SK-N-SH (cell line): ENCODE measurements at regions of chr17 and their contacts with region 1.

Region 1: DNA sequence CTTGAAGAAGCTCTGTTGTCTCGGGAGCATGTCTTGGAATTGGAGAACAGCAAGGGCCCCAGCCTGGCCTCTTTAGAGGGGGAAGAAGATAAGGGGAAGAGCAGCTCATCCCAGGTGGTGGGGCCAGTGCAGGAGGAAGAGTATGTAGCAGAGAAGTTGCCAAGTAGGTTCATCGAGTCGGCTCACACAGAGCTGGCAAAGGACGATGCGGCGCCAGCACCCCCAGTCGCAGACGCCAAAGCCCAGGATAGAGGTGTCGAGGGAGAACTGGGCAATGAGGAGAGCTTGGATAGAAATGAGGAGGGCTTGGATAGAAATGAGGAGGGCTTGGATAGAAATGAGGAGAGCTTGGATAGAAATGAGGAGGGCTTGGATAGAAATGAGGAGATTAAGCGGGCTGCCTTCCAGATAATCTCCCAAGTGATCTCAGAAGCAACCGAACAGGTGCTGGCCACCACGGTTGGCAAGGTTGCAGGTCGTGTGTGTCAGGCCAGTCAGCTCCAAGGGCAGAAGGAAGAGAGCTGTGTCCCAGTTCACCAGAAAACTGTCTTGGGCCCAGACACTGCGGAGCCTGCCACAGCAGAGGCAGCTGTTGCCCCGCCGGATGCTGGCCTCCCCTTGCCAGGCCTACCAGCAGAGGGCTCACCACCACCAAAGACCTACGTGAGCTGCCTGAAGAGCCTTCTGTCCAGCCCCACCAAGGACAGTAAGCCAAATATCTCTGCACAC is 21.2 kb downstream of the AKAP1 start:
- DNase-seq: peak; percentile 52
- H3K4me3 ChIP-seq: no peak overlapping the region
- H3K27ac ChIP-seq: no peak overlapping the region
- H3K4me1 ChIP-seq: peaks cover 0 to 18% of the 10 kb centered on the region in 2 experiments; a peak in 1 of 4 replicates
- H3K27me3 ChIP-seq: no peaks in the 10 kb centered on the region
- CTCF ChIP-seq: no peak; the same call in 1 of the 2 replicates
- EP300 ChIP-seq: no peak
- RAD21 ChIP-seq: 0 out of 2 replicates have a peak, but pooled peaks have one; percentile 23

Region 2: GRCh38 chr17:57067162-57067561 is 39.1 kb before region 1 on chr17:
- CTCF ChIA-PET with region 1: no interaction called
- POLR2A ChIA-PET with region 1: no interaction called
- DNase-seq: no peak
- H3K4me3 ChIP-seq: no peak overlapping the region
- H3K27ac ChIP-seq: no peak overlapping the region
- H3K4me1 ChIP-seq: no peaks in the 10 kb centered on the region
- H3K27me3 ChIP-seq: peaks cover 8% of the 10 kb centered on the region
- CTCF ChIP-seq: no peak
- EP300 ChIP-seq: no peak
- RAD21 ChIP-seq: no peak

Region 3: GRCh38 chr17:57084802-57085447 is 21.3 kb before region 1 on chr17 and contains the start of gene AKAP1:
- CTCF ChIA-PET with region 1: interaction called, 16 read pairs
- POLR2A ChIA-PET with region 1: no interaction called
- DNase-seq: peak; percentile 100
- H3K4me3 ChIP-seq: peak within 1 kb of the TSS; percentile 87 to 97
- H3K27ac ChIP-seq: peak within 1 kb of the TSS; percentile 94 to 98
- H3K4me1 ChIP-seq: peaks cover 0 to 12% of the 10 kb centered on the region in 2 experiments; a peak in 2 of 4 replicates
- H3K27me3 ChIP-seq: no peaks in the 10 kb centered on the region
- CTCF ChIP-seq: no peak
- EP300 ChIP-seq: no peak
- RAD21 ChIP-seq: no peak
- polyA plus RNA-seq, gene AKAP1: 23.7 and 36.3 TPM in 2 replicates

Region 4: DNA sequence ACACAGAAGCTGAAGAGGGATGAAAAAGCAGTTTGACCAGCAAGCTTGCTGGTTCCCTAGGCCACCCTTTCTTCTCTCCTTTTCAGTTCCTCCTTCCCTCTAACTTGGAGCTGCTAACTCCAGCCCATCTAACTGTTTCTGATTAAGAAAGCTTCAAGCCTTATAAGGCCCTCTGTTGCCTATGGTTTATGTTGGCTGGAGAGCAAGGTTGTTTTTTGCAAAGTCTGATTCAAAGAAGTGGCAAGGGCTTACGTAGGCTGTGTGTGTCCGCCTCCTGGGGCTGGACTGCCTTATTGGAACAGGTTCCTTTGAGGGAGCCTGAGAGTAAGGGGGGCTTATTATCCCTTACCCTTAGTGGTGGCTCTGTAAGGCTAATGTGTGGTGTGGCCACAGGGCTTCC is 14.1 kb before region 1 on chr17:
- CTCF ChIA-PET with region 1: interaction called, 16 read pairs
- POLR2A ChIA-PET with region 1: no interaction called
- DNase-seq: no peak
- H3K4me3 ChIP-seq: no peak overlapping the region
- H3K27ac ChIP-seq: no peak overlapping the region
- H3K4me1 ChIP-seq: peaks cover 0 to 8% of the 10 kb centered on the region in 2 experiments; a peak in 2 of 4 replicates
- H3K27me3 ChIP-seq: no peaks in the 10 kb centered on the region
- CTCF ChIP-seq: no peak
- EP300 ChIP-seq: no peak
- RAD21 ChIP-seq: no peak

Region 5: GRCh38 chr17:57121338-57122042 is 15.2 kb after region 1 on chr17:
- CTCF ChIA-PET with region 1: interaction called, 13 read pairs
- POLR2A ChIA-PET with region 1: no interaction called
- DNase-seq: peak; percentile 80
- H3K4me3 ChIP-seq: no peak overlapping the region
- H3K27ac ChIP-seq: peak overlapping the region in 1 of 2 experiments; percentile 29; a peak in 1 of 4 replicates
- H3K4me1 ChIP-seq: peaks cover 0 to 17% of the 10 kb centered on the region in 2 experiments; a peak in 1 of 4 replicates
- H3K27me3 ChIP-seq: no peaks in the 10 kb centered on the region
- CTCF ChIP-seq: peak; percentile 73
- EP300 ChIP-seq: no peak
- RAD21 ChIP-seq: peak; percentile 76